Mammary epithelial cell (primary cell): ENCODE measurements at regions of chr17 and their contacts with region 1.

Region 1: GRCh38 chr17:3683054-3683511 is 12.9 kb downstream of the P2RX5 start:
- DNase-seq: peak; percentile 19
- H3K4me3 ChIP-seq: no peak overlapping the region
- H3K27ac ChIP-seq: no peak overlapping the region
- H3K4me1 ChIP-seq: no peaks in the 10 kb centered on the region
- H3K27me3 ChIP-seq: no peaks in the 10 kb centered on the region
- CTCF ChIP-seq: peak; percentile 91 to 95

Region 2: GRCh38 chr17:3723556-3724369 is 40.7 kb after region 1 on chr17 and contains the start of gene HASPIN:
- CTCF ChIA-PET with region 1: no interaction called
- dilution Hi-C with region 1: no loop called
- in situ Hi-C with region 1: no loop called
- intact Hi-C with region 1: loop called (anchors 5 kb)
- DNase-seq: peak; percentile 88
- H3K4me3 ChIP-seq: peak within 1 kb of the TSS; percentile 66 to 95 (median 92)
- H3K27ac ChIP-seq: peak within 1 kb of the TSS; percentile 43
- H3K4me1 ChIP-seq: peaks cover 32% of the 10 kb centered on the region
- H3K27me3 ChIP-seq: no peaks in the 10 kb centered on the region
- CTCF ChIP-seq: peak; percentile 15 to 27
- total RNA-seq, gene HASPIN: 2.0 to 8.9 TPM